Aorta (tissue), 5 donors: ENCODE measurements at regions of chr1 and their contacts with region 1.

Region 1: DNA sequence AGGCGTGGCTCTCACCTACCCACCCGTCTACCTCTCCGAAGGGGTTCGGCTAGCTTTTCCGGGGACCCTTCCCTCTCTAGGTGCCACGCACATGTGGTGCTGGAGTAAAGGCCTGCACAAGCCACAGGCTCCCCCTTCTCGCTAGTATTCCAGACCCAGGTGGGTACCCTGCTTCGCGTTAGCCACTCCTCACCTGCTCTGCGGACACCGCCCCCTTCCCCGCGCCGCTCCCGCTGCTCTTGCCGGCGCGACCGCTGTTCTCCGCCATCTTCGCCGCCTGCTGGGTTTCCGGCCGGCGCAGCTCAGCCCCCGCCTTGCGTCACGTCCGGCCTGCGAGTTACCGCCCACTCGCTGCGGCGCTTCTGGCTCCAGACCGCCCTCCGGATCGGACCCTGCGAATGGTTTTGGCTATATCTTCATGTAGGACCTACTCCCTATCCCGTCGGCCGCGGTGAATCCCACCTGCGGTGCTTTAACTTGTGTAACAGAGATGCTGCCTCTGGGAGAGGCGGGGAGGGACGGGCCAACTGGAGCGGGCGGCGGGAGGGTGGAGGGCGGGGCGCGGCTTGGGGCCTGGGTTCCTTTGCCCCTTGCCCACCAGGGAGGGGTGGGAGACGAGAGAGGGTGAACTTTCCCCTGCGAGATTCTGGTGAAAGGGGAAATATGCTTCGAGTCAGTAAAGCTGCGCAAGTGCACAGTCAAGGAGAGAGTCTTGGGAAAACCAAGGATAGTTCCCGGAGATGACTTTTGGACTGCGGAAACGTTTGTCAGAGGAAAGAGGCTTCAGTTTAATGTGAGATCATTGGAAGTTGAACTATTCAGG is at the starts of genes NIT1 and PFDN2:
- DNase-seq: peak; percentile 90 to 97
- ATAC-seq: peak; percentile 95
- H3K4me3 ChIP-seq: peak within 1 kb of the TSS; percentile 4 to 65
- H3K27ac ChIP-seq: peak within 1 kb of the TSS; percentile 20 to 26
- H3K4me1 ChIP-seq: peaks cover 0 to 3% of the 10 kb centered on the region in 2 donors
- H3K27me3 ChIP-seq: no peaks in the 10 kb centered on the region
- total RNA-seq, gene NIT1: 31.1 to 41.6 TPM
- total RNA-seq, gene PFDN2: 36.4 to 42.3 TPM

Region 2: DNA sequence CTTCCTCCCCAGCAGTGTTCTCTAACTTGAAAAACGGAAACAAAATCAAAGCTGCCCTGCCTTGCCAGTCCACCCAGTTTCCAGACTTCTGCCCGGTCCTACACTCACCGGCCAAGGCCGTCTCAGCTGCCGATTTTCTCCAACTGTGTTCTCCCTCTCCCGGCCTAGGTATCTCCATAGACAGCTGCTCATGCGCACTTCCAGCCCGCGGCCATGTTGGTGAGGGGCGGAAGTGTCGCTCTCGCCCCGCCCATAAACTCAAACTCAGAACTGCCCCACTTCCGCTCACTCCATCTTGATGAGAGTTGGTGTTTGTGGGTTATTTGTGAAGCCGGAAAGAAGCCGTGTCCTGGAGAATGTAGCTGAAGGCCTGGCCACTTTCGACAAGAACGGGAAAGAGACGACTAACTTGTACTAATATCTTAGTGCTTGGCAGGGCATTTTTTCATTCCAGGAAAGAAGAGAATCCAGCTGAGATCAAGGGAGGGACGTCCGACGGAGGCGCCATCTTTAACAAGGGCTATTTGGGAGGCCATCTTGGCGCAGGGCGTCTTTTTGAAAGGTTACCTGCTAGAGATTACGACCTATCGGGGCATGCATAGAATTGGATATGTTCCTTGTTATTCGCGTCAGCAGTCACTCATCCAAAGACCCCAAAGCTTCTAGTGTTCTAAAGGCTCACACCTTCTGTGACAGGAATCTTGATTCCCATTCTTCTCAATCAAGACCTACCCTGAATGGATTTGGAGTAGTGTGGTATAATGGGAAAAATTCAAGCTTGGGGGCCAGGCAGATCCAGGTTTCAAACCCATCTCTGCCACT is 72.0 kb before region 1 on chr1 and contains the start of gene USF1:
- intact Hi-C with region 1: loop called in 1 of 2 experiments (anchors 5 kb)
- DNase-seq: peak; percentile 95 to 96
- ATAC-seq: peak; percentile 97
- H3K4me3 ChIP-seq: peak within 1 kb of the TSS; percentile 74 to 92
- H3K27ac ChIP-seq: peak within 1 kb of the TSS; percentile 83
- H3K4me1 ChIP-seq: no peaks in the 10 kb centered on the region
- H3K27me3 ChIP-seq: no peaks in the 10 kb centered on the region
- total RNA-seq, gene USF1: 42.2 to 67.0 TPM